Activated naive CD4-positive, alpha-beta T cell treated with anti-CD3 and anti-CD28 coated beads for 36 hours (primary cell): ENCODE measurements at regions of chr3 and their contacts with region 1.

Region 1: DNA sequence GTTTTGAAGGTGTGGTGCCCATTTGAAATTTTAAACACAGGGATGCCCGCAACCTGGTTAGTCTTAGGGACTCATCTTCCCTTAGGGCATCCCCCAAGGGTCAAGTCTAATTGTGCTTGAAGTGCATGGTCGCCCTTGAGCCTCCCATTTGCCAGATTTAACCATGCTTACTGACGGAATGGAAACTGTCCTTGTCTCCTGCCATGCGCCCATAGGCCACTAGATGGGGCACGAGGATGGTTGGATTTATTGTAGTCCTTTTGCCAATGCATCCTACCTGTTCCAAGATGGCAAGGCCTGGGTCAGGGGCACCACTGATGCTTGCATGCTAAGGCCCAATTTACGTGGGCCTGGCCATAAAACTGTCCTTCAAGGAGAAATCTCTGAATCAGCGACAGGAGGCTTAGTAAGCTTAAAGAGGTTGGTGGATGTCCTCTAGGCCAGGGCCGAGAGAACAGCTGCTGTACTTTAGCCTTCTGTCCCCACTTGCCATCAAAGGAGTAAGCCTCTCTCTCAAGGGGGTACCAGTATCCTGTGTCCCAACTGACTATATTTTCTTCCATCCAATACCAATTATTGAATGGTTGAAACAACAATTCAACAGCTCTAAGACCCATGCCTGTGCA is 355.4 kb downstream of the OTOL1 start:
- DNase-seq: peak; percentile 49
- H3K4me3 Mint-ChIP-seq: no peak overlapping the region
- H3K27ac Mint-ChIP-seq: no peak overlapping the region
- H3K4me1 Mint-ChIP-seq: no peaks in the 10 kb centered on the region
- H3K27me3 Mint-ChIP-seq: peaks cover 3% of the 10 kb centered on the region

Region 2: DNA sequence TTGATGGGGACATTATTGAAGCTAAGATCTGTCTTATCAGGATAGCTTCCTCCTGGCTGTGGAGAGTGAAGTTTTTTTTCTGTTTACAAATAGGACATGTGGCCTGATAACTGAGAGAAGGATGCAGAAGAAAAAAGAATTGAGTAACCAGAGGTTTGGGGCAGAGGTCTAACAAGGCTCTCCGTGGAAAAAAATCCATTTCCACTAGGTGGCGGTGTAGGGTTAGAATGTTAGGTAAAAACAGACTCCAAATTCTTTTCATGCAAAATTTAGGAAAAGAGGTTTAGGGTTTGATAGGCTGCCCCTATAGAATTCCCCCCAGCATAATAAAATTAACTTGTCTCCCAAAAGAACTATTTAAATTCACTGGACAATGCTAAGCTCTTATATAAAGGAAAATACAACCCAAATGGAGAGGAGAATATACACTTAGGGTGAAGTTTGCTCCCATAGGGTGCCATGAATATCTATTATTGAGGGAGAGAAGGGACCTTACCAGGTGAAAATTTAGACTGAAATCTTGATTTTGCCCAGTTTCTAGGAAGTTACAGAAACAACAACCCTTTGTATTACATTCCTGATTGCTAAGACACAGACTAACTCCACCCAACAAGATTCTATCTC is 1204.9 kb after region 1 on chr3:
- CTCF ChIA-PET with region 1: no interaction called
- intact Hi-C with region 1: loop called (anchors 10 kb)
- DNase-seq: peak; percentile 46
- H3K4me3 Mint-ChIP-seq: no peak overlapping the region
- H3K27ac Mint-ChIP-seq: no peak overlapping the region
- H3K4me1 Mint-ChIP-seq: no peaks in the 10 kb centered on the region
- H3K27me3 Mint-ChIP-seq: no peaks in the 10 kb centered on the region